ENCODE measurements at regions of chr11 and their contacts with region 1.

Region 1: DNA sequence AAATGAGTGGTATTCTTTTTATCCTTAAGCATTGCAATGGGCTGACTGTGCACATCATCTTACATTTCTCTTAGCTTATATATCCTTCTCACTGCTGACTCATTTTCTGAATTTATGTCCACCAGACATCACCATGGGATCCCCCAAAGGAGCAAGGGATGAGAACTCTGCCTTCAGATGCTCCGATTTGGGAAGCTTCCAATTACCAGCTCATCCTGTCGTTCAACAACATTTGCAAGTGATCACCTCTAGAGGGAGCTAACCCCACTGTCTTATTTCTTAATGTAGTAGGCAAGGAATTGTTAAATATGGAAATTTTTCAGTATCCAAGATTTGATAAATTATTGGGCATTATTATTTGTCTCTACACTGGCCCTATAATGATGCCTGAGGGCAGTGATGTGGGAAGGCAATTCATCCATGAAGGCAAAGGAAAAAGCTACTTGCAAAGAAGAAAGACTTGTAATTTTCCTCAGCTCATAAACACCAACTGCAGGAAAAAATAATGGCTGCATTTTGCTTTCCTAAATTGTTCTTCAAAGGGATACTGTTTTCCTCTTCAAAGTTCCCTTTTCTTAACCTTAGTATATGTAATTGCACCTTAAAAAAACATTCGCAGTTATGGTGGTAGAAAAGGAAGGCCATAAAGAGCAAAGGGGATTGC is 102.4 kb upstream of the FSHB start:
- DNase-seq: peak; percentile 20
- H3K4me3 ChIP-seq: no peak overlapping the region; a peak in 1 of 4 replicates
- H3K27ac ChIP-seq: no peak overlapping the region
- H3K4me1 ChIP-seq: no peaks in the 10 kb centered on the region
- H3K27me3 ChIP-seq: no peaks in the 10 kb centered on the region
- CTCF ChIP-seq: peak; percentile 85
- EP300 ChIP-seq: no peak
- RAD21 ChIP-seq: peak; percentile 58

Region 2: GRCh38 chr11:30107899-30108298 is 20.5 kb before region 1 on chr11:
- CTCF ChIA-PET with region 1: interaction called, 15 read pairs
- POLR2A ChIA-PET with region 1: no interaction called
- DNase-seq: no peak
- H3K4me3 ChIP-seq: no peak overlapping the region
- H3K27ac ChIP-seq: no peak overlapping the region
- H3K4me1 ChIP-seq: no peaks in the 10 kb centered on the region
- H3K27me3 ChIP-seq: no peaks in the 10 kb centered on the region; the same call in 1 of the 2 replicates
- CTCF ChIP-seq: no peak
- EP300 ChIP-seq: no peak
- RAD21 ChIP-seq: no peak

Region 3: DNA sequence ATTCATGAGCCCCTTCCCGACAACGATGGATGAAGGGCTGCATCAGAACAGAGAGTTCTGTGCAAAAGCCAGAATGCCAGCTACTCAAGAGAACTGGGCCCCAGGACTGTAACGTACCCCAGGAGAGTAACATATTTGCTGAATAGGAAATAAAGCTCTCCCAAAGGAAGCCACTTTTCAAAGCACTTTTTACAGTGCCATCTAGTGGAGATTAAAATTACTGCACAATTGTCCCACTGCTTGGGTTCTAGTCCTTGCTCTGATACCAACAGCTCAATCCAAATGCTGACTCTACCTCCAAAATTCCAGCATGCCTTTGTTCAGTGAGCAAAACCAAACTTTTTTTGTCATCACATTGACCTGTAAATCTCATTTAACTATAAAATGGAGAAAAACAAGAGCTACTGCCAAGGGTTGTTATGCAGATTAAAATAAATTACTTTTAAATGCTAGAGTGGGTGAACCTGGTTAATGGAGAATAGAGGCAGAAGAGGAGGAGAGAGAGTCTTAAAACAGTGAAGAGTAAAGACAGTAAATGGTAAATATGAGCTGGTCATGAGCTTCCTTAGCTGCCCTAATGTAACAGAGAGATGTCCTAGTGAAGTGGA is 14.8 kb after region 1 on chr11:
- CTCF ChIA-PET with region 1: interaction called, 128 read pairs
- POLR2A ChIA-PET with region 1: no interaction called
- DNase-seq: peak; percentile 21
- H3K4me3 ChIP-seq: peak overlapping the region in 1 of 2 experiments; percentile 9; a peak in 1 of 4 replicates
- H3K27ac ChIP-seq: no peak overlapping the region
- H3K4me1 ChIP-seq: no peaks in the 10 kb centered on the region
- H3K27me3 ChIP-seq: no peaks in the 10 kb centered on the region
- CTCF ChIP-seq: peak; percentile 82
- EP300 ChIP-seq: no peak
- RAD21 ChIP-seq: peak; percentile 60

Region 4: GRCh38 chr11:30155428-30155827 is 27.0 kb after region 1 on chr11:
- CTCF ChIA-PET with region 1: interaction called, 11 read pairs
- POLR2A ChIA-PET with region 1: no interaction called
- DNase-seq: no peak
- H3K4me3 ChIP-seq: no peak overlapping the region
- H3K27ac ChIP-seq: no peak overlapping the region
- H3K4me1 ChIP-seq: no peaks in the 10 kb centered on the region
- H3K27me3 ChIP-seq: no peaks in the 10 kb centered on the region
- CTCF ChIP-seq: no peak
- EP300 ChIP-seq: no peak
- RAD21 ChIP-seq: no peak

Measured in SK-N-SH (cell line).